ENCODE measurements at regions of chr10 and their contacts with region 1.

Region 1: GRCh38 chr10:61903221-61903927 is 1.9 kb downstream of the ARID5B start:
- DNase-seq: peak; percentile 68 to 81
- ATAC-seq: peak; percentile 46 to 72 (median 64)
- H3K4me3 ChIP-seq: peak overlapping the region; percentile 81
- H3K4me3 Mint-ChIP-seq: peak overlapping the region; percentile 93
- H3K27ac ChIP-seq: peak overlapping the region; percentile 92
- H3K27ac Mint-ChIP-seq: peak overlapping the region; percentile 87 to 89
- H3K4me1 ChIP-seq: peaks cover 3% of the 10 kb centered on the region
- H3K4me1 Mint-ChIP-seq: peaks cover 57 to 60% of the 10 kb centered on the region in 2 donors
- H3K27me3 ChIP-seq: no peaks in the 10 kb centered on the region
- H3K27me3 Mint-ChIP-seq: no peaks in the 10 kb centered on the region
- CTCF ChIP-seq: peak; percentile 16

Region 2: GRCh38 chr10:61812052-61812721 is 91.2 kb before region 1 on chr10:
- intact Hi-C with region 1: no loop called
- DNase-seq: no peak
- ATAC-seq: peak in 1 of 3 donors; percentile 53
- H3K4me3 ChIP-seq: no peak overlapping the region
- H3K4me3 Mint-ChIP-seq: no peak overlapping the region
- H3K27ac ChIP-seq: no peak overlapping the region
- H3K27ac Mint-ChIP-seq: no peak overlapping the region
- H3K4me1 ChIP-seq: peaks cover 3% of the 10 kb centered on the region
- H3K4me1 Mint-ChIP-seq: peaks cover 0 to 5% of the 10 kb centered on the region in 2 donors
- H3K27me3 ChIP-seq: no peaks in the 10 kb centered on the region
- H3K27me3 Mint-ChIP-seq: no peaks in the 10 kb centered on the region
- CTCF ChIP-seq: no peak

Region 3: GRCh38 chr10:61923213-61923949 is 20.0 kb after region 1 on chr10:
- intact Hi-C with region 1: no loop called
- DNase-seq: no peak
- ATAC-seq: no peak
- H3K4me3 ChIP-seq: no peak overlapping the region
- H3K4me3 Mint-ChIP-seq: no peak overlapping the region
- H3K27ac ChIP-seq: no peak overlapping the region
- H3K27ac Mint-ChIP-seq: peak overlapping the region; percentile 7 to 27
- H3K4me1 ChIP-seq: no peaks in the 10 kb centered on the region
- H3K4me1 Mint-ChIP-seq: peaks cover 43 to 44% of the 10 kb centered on the region in 2 donors
- H3K27me3 ChIP-seq: no peaks in the 10 kb centered on the region
- H3K27me3 Mint-ChIP-seq: no peaks in the 10 kb centered on the region
- CTCF ChIP-seq: no peak

Region 4: DNA sequence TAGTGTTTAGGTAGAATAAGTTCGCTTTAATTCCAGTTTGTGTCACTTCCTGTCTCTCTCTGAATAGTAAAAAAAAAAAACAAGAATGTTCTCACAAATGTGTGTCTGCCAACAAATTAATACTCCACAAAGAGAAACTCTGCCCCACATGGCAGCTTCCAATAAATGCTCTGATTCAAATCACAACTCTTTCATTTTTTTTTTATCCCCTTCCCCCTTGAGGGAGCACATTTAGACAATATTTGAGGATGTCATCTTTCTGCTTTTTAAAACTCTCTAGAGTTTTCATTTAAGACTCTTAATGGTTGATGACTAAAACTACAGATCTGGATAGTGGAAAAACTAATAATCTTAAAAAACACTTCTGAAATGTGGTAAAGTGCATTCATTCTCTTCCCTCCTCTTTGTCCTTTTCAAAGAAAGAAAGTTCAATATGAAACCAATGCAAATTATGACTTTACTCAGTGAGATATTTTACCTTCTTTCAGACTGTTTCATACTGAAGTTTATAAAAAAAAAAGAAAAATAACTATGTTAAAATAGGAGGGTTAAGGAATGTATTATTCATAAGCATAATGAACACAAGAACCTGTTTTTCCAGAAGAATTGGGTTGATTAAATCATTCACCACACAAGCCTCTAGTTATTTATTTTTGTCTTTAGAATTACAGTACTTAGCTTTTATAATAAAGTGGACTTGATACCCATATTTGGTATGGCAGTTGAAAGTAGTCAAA is 40.5 kb after region 1 on chr10:
- intact Hi-C with region 1: loop called (anchors 1 kb)
- DNase-seq: peak in 1 of 2 donors; percentile 68
- ATAC-seq: peak; percentile 47 to 66 (median 57)
- H3K4me3 ChIP-seq: peak overlapping the region; percentile 30
- H3K4me3 Mint-ChIP-seq: peak overlapping the region; percentile 86
- H3K27ac ChIP-seq: peak overlapping the region; percentile 93
- H3K27ac Mint-ChIP-seq: peak overlapping the region; percentile 93 to 95
- H3K4me1 ChIP-seq: peaks cover 11% of the 10 kb centered on the region
- H3K4me1 Mint-ChIP-seq: peaks cover 48 to 53% of the 10 kb centered on the region in 2 donors
- H3K27me3 ChIP-seq: no peaks in the 10 kb centered on the region
- H3K27me3 Mint-ChIP-seq: no peaks in the 10 kb centered on the region
- CTCF ChIP-seq: peak; percentile 22

Region 5: GRCh38 chr10:61978965-61979364 is 75.6 kb after region 1 on chr10:
- intact Hi-C with region 1: no loop called
- DNase-seq: peak in 1 of 2 donors; percentile 19
- ATAC-seq: peak in 1 of 3 donors; percentile 41
- H3K4me3 ChIP-seq: no peak overlapping the region
- H3K4me3 Mint-ChIP-seq: no peak overlapping the region
- H3K27ac ChIP-seq: no peak overlapping the region
- H3K27ac Mint-ChIP-seq: no peak overlapping the region
- H3K4me1 ChIP-seq: no peaks in the 10 kb centered on the region
- H3K4me1 Mint-ChIP-seq: peaks cover 10 to 19% of the 10 kb centered on the region in 2 donors
- H3K27me3 ChIP-seq: no peaks in the 10 kb centered on the region
- H3K27me3 Mint-ChIP-seq: no peaks in the 10 kb centered on the region
- CTCF ChIP-seq: no peak

Region 6: GRCh38 chr10:61992671-61993668 is 89.6 kb after region 1 on chr10:
- intact Hi-C with region 1: loop called (anchors 1 kb)
- DNase-seq: peak; percentile 43 to 84
- ATAC-seq: peak; percentile 72 to 93 (median 84)
- H3K4me3 ChIP-seq: peak overlapping the region; percentile 14
- H3K4me3 Mint-ChIP-seq: peak overlapping the region; percentile 92
- H3K27ac ChIP-seq: peak overlapping the region; percentile 87
- H3K27ac Mint-ChIP-seq: peak overlapping the region; percentile 93 to 96
- H3K4me1 ChIP-seq: peaks cover 13% of the 10 kb centered on the region
- H3K4me1 Mint-ChIP-seq: peaks cover 50 to 57% of the 10 kb centered on the region in 2 donors
- H3K27me3 ChIP-seq: no peaks in the 10 kb centered on the region
- H3K27me3 Mint-ChIP-seq: no peaks in the 10 kb centered on the region
- CTCF ChIP-seq: no peak

Region 7: DNA sequence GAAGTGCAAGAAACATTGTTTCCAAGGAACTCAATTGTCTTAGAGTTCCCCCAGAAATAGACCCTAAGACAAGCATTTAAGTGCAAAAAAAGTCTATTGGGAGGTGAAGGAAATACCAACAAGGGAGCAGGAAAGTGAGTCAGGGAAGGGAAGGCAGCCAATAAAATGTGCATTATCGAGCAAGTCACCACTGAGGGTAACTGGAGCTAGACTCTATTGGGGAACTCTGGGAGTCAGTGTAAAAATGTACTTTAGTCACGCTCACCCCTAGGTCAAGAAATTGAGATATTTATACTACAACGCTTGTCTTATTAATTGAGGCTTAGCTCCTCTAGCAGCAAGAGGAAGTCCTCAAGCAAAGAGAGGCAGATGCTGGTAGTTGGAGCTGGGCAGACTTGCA is 227.6 kb after region 1 on chr10:
- intact Hi-C with region 1: no loop called
- DNase-seq: no peak
- ATAC-seq: no peak
- H3K4me3 ChIP-seq: no peak overlapping the region
- H3K4me3 Mint-ChIP-seq: no peak overlapping the region
- H3K27ac ChIP-seq: no peak overlapping the region
- H3K27ac Mint-ChIP-seq: no peak overlapping the region
- H3K4me1 ChIP-seq: no peaks in the 10 kb centered on the region
- H3K4me1 Mint-ChIP-seq: peaks cover 0 to 5% of the 10 kb centered on the region in 2 donors
- H3K27me3 ChIP-seq: no peaks in the 10 kb centered on the region
- H3K27me3 Mint-ChIP-seq: no peaks in the 10 kb centered on the region
- CTCF ChIP-seq: no peak

Measured in natural killer cell (primary cell).